ENCODE measurements at regions of chr7 and their contacts with region 1.

Region 1: DNA sequence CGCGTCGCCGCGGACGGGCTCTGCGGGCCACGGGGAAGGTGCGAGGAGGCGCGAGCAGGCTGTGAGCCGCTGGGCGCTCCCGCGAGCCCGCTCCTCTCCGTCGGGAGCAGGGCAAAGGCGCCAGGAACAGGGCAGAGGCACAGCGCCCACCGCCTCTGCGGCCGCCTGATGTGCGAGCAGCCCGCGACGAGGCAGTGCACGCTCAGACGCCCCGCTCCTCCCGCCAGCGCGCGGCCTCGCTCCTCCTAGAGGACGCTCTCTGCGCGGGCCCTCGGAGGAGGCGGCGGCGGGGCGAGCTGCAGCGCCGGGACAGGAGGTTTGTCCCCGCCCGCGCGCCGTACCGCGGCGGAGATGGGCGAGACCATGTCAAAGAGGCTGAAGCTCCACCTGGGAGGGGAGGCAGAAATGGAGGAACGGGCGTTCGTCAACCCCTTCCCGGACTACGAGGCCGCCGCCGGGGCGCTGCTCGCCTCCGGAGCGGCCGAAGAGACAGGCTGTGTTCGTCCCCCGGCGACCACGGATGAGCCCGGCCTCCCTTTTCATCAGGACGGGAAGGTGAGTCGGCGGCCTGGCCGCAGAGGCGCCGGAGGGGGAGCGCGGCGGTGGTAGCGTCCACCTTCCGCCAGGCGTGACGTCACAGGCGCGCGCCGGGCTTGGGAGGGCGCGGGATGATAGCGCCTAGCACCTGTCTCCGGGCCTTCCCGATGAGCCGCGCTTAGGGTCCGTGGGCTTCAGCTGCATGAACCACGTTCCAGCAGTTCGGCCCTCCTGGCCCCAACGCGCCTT is 731 bp downstream of the LANCL2 start:
- DNase-seq: peak; percentile 95 to 100 (median 98)
- H3K4me3 ChIP-seq: peak overlapping the region; percentile 98 to 99
- H3K4me3 Mint-ChIP-seq: peak overlapping the region; percentile 90 to 96 (median 94)
- H3K27ac ChIP-seq: peak overlapping the region; percentile 98
- H3K27ac Mint-ChIP-seq: peak overlapping the region; percentile 98 to 99 (median 99)
- H3K4me1 ChIP-seq: peaks cover 27% of the 10 kb centered on the region
- H3K4me1 Mint-ChIP-seq: peaks cover 13 to 25% (median 21%) of the 10 kb centered on the region in 4 donors
- H3K27me3 ChIP-seq: no peaks in the 10 kb centered on the region
- H3K27me3 Mint-ChIP-seq: no peaks in the 10 kb centered on the region

Region 2: GRCh38 chr7:54556121-54556520 is 809.7 kb before region 1 on chr7:
- CTCF ChIA-PET with region 1: no interaction called
- POLR2A ChIA-PET with region 1: no interaction called
- intact Hi-C with region 1: no loop called
- DNase-seq: no peak
- H3K4me3 ChIP-seq: no peak overlapping the region
- H3K4me3 Mint-ChIP-seq: no peak overlapping the region
- H3K27ac ChIP-seq: no peak overlapping the region
- H3K27ac Mint-ChIP-seq: no peak overlapping the region
- H3K4me1 ChIP-seq: no peaks in the 10 kb centered on the region
- H3K4me1 Mint-ChIP-seq: no peaks in the 10 kb centered on the region
- H3K27me3 ChIP-seq: no peaks in the 10 kb centered on the region
- H3K27me3 Mint-ChIP-seq: no peaks in the 10 kb centered on the region

Region 3: DNA sequence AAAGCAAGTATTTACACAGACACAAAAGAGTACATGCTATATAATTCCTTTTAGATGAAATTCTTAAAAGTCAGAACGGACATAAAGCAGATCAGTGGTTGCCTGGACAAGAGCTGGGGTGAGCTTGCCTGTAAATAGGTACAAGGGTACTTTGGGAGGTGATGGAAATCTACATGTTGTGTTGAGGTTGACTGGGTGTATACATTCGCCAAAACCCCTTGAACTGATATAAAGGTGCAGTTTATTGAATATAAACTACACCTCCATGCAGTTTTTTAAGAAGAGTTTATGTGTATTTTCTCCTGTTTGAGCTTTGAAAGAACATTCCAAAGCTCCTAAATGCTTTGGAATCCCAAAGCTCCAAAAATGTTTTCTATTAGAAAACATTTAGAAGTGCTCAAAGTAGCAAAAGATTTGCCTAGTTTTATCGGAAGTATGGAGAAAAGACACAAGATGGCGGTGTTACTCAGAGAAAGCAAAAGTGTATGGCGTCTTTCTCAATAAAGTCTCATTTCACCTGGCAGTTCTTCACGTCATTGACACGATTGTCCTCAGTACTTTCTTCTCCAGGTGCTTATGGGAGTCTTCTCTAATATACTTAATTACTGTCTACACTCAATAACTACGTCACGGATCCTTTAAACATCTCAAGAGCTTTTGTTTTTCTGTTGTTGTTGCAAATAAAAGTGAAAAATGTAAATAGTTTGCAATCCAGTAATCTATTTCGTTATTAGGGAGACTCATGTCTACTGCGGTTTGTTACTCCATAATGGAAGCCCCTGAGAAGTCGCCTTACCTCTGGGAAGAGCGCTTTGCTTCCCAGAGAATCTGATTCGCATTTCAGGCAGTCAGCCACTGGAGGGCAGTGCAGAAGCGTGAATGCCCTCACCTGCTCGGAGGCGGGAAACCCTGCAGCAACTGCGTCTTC is 592.1 kb before region 1 on chr7:
- CTCF ChIA-PET with region 1: no interaction called
- POLR2A ChIA-PET with region 1: no interaction called
- intact Hi-C with region 1: loop called (anchors 5 kb)
- DNase-seq: peak; percentile 46 to 60 (median 53)
- H3K4me3 ChIP-seq: peak overlapping the region in 1 of 2 donors; percentile 36
- H3K4me3 Mint-ChIP-seq: peak overlapping the region; percentile 74 to 87 (median 78)
- H3K27ac ChIP-seq: peak overlapping the region; percentile 18
- H3K27ac Mint-ChIP-seq: peak overlapping the region in 6 of 7 donors; percentile 22 to 83 (median 76)
- H3K4me1 ChIP-seq: peaks cover 10% of the 10 kb centered on the region
- H3K4me1 Mint-ChIP-seq: peaks cover 0 to 13% (median 3%) of the 10 kb centered on the region in 4 donors
- H3K27me3 ChIP-seq: peaks cover 6% of the 10 kb centered on the region
- H3K27me3 Mint-ChIP-seq: peaks cover 9 to 10% of the 10 kb centered on the region in 2 donors

Region 4: GRCh38 chr7:55309040-55309991 is 56.6 kb before region 1 on chr7:
- CTCF ChIA-PET with region 1: no interaction called
- POLR2A ChIA-PET with region 1: interaction called, 25 read pairs
- intact Hi-C with region 1: no loop called
- DNase-seq: peak; percentile 45 to 77 (median 52)
- H3K4me3 ChIP-seq: peak overlapping the region in 1 of 2 donors; percentile 22
- H3K4me3 Mint-ChIP-seq: peak overlapping the region in 7 of 8 donors; percentile 11 to 67 (median 28)
- H3K27ac ChIP-seq: no peak overlapping the region
- H3K27ac Mint-ChIP-seq: peak overlapping the region; percentile 65 to 91 (median 83)
- H3K4me1 ChIP-seq: peaks cover 25% of the 10 kb centered on the region
- H3K4me1 Mint-ChIP-seq: peaks cover 15 to 30% (median 22%) of the 10 kb centered on the region in 4 donors
- H3K27me3 ChIP-seq: no peaks in the 10 kb centered on the region
- H3K27me3 Mint-ChIP-seq: no peaks in the 10 kb centered on the region

Region 5: GRCh38 chr7:55534175-55534915 is 168.5 kb after region 1 on chr7:
- CTCF ChIA-PET with region 1: no interaction called
- POLR2A ChIA-PET with region 1: interaction called, 24 read pairs
- intact Hi-C with region 1: no loop called
- DNase-seq: peak in 3 of 5 donors; percentile 27 to 84 (median 33)
- H3K4me3 ChIP-seq: peak overlapping the region in 1 of 2 donors; percentile 22
- H3K4me3 Mint-ChIP-seq: peak overlapping the region; percentile 71 to 88 (median 76)
- H3K27ac ChIP-seq: peak overlapping the region; percentile 60
- H3K27ac Mint-ChIP-seq: peak overlapping the region; percentile 92 to 97 (median 95)
- H3K4me1 ChIP-seq: peaks cover 96% of the 10 kb centered on the region
- H3K4me1 Mint-ChIP-seq: peaks cover 82 to 97% (median 91%) of the 10 kb centered on the region in 4 donors
- H3K27me3 ChIP-seq: no peaks in the 10 kb centered on the region
- H3K27me3 Mint-ChIP-seq: no peaks in the 10 kb centered on the region

Region 6: GRCh38 chr7:55951637-55952351 is 585.9 kb after region 1 on chr7 and contains the start of gene MRPS17:
- CTCF ChIA-PET with region 1: no interaction called
- POLR2A ChIA-PET with region 1: no interaction called
- intact Hi-C with region 1: loop called (anchors 1 kb)
- DNase-seq: peak; percentile 92 to 95 (median 93)
- H3K4me3 ChIP-seq: peak within 1 kb of the TSS; percentile 88 to 96
- H3K4me3 Mint-ChIP-seq: peak within 1 kb of the TSS; percentile 92 to 97 (median 94)
- H3K27ac ChIP-seq: peak within 1 kb of the TSS; percentile 71
- H3K27ac Mint-ChIP-seq: peak within 1 kb of the TSS; percentile 87 to 99 (median 98)
- H3K4me1 ChIP-seq: peaks cover 12% of the 10 kb centered on the region
- H3K4me1 Mint-ChIP-seq: peaks cover 12 to 32% (median 18%) of the 10 kb centered on the region in 4 donors
- H3K27me3 ChIP-seq: no peaks in the 10 kb centered on the region
- H3K27me3 Mint-ChIP-seq: no peaks in the 10 kb centered on the region
- total RNA-seq, gene MRPS17: 11.5 to 13.2 TPM

Region 7: DNA sequence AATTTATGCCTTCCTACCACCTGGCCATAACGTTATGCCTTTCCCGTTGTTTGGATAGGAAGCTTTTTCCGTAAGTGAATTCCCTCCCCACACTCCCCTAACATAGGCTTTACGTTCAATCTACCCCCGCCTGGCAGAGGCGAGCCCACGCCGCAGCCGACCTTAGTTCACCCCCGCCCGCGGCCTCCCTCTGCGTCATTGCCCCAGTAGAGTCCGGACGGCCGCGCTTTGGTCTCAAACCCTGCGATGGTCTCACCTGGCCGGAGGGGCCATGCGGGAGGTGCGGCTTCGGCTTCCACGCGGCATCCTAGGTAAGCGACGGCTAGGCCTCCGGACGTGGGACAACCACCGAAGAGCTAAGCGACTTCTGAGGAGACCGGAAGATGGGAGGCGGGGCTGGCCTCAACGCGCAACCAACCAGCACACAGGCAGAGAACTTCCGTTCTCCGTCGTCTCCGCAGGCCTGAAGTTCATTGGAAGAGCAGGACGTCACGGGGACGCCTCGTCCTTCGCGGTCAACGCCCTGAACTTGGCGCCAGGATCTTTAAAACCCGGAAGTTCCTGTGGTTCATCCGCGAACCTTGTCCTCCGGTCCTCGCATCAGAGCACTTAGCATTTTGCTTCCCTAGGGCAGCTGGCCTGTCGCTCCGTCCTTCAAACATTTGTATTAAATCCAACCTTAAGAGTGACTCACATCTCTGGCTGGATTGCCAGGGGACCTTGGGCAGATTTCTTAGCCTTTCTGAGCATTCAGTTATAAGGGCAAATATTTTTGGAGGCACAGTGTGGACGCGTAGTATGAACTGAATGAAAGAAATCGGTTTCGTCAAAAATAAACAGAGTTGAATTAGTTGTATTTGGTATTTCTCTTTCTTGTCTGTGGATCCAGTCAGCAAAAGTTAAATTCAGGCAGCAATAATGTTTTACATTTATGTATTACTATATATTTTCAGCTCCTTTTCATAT is 740.5 kb after region 1 on chr7 and contains the start of gene CHCHD2:
- CTCF ChIA-PET with region 1: no interaction called
- POLR2A ChIA-PET with region 1: interaction called, 8 read pairs
- intact Hi-C with region 1: loop called (anchors 1 kb)
- DNase-seq: peak; percentile 92 to 98 (median 95)
- H3K4me3 ChIP-seq: peak within 1 kb of the TSS; percentile 71 to 98
- H3K4me3 Mint-ChIP-seq: peak within 1 kb of the TSS; percentile 96 to 99 (median 97)
- H3K27ac ChIP-seq: peak within 1 kb of the TSS; percentile 95
- H3K27ac Mint-ChIP-seq: peak within 1 kb of the TSS; percentile 92 to 99 (median 98)
- H3K4me1 ChIP-seq: peaks cover 28% of the 10 kb centered on the region
- H3K4me1 Mint-ChIP-seq: peaks cover 16 to 46% (median 27%) of the 10 kb centered on the region in 4 donors
- H3K27me3 ChIP-seq: no peaks in the 10 kb centered on the region
- H3K27me3 Mint-ChIP-seq: peaks cover 0 to 2% of the 10 kb centered on the region in 2 donors
- total RNA-seq, gene CHCHD2: 147 to 156 TPM

Measured in CD4-positive, alpha-beta memory T cell (primary cell).